Left ventricle myocardium inferior (tissue), 1 donor: ENCODE measurements at regions of chr7 and their contacts with region 1.

Region 1: DNA sequence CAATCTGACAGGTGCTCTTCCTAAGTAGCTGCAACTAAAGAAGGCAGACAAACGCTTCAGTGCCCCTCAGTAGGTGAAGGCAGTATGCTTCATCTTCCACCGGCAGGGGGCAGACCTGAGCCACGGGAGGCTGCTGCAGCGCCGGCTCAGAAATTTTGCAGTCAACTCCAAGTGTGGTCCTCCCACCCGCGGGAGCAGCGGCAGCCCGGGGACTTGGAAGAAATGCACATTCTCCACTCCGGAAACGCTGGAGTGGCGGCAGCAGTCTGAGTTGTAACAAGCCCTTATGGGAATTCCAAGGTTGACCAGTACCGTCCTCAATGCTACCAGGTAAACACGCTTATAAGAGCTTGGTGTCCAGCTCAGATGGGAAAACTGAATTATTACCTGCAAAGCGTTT is 3.4 kb downstream of the IGFBP3 start:
- DNase-seq: peak; percentile 82
- H3K4me3 ChIP-seq: peak overlapping the region; percentile 75
- H3K27ac ChIP-seq: no peak overlapping the region
- H3K4me1 ChIP-seq: peaks cover 51% of the 10 kb centered on the region
- H3K27me3 ChIP-seq: peaks cover 10% of the 10 kb centered on the region
- CTCF ChIP-seq: peak; percentile 99

Region 2: GRCh38 chr7:45494885-45495284 is 422.8 kb before region 1 on chr7:
- intact Hi-C with region 1: no loop called
- DNase-seq: no peak
- H3K4me3 ChIP-seq: no peak overlapping the region
- H3K27ac ChIP-seq: no peak overlapping the region
- H3K4me1 ChIP-seq: no peaks in the 10 kb centered on the region
- H3K27me3 ChIP-seq: peaks cover 37% of the 10 kb centered on the region
- CTCF ChIP-seq: no peak

Region 3: DNA sequence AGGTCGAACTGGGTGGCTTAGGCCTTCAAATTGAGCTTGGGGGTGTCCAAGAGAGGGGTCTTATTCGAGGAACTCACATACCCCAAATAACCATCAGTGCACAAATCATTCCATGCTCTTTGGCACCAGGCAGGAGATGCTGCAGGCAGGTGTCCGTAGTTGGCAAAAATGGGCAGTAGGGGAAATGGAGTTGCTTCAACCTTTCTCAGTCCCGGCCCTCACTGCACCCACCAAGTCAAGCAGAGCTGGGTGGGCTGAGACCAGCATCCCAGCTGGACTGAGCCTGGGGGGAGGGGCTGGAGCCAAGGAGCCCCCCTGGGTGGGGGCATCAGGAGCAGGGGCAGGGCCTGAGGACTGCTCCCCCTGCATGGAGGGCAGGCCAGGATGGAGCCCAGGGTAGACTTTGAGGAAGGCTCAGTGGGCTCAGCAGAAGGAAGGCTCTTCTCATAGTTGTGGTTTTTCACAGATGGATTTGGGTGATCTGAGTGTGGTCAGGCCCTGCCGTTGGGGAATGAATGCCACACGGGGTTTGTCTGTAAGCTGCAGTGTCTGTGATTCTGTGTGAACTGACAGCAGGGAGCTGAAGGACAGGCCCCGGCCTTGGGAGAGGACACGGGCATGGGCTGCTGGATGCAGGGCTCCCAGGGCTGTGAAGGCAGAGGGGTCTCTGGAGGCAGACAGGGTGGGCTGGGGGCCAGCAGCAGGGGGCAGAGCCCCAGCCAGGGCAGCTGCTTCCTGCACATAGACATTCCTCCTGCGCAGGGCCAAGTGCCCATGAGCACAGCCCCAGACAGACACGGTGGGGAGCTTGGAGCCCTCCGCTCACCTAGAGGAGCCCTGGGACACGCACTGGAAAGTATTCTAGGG is 199.0 kb before region 1 on chr7:
- intact Hi-C with region 1: no loop called
- DNase-seq: no peak
- H3K4me3 ChIP-seq: no peak overlapping the region
- H3K27ac ChIP-seq: no peak overlapping the region
- H3K4me1 ChIP-seq: peaks cover 14% of the 10 kb centered on the region
- H3K27me3 ChIP-seq: no peaks in the 10 kb centered on the region
- CTCF ChIP-seq: no peak

Region 4: DNA sequence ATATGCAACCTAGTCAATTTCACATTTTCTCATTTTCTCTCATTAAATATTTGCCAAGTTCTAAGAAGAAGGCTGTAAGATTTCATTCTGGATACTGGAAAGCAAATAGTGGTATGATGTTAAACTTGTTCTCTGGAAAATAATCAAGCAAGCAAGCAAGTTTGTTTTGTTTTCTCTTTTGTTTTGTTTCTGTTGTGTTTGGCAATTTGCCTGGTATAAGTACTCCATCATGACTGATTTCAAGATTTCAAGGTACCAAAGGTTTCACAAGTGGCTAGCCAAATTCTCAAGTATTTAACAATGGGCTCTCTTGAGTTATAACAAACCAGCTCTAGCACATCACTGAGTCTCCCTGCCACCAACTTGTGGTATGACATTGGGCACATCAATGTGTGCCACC is 155.0 kb after region 1 on chr7:
- intact Hi-C with region 1: no loop called
- DNase-seq: no peak
- H3K4me3 ChIP-seq: no peak overlapping the region
- H3K27ac ChIP-seq: no peak overlapping the region
- H3K4me1 ChIP-seq: no peaks in the 10 kb centered on the region
- H3K27me3 ChIP-seq: no peaks in the 10 kb centered on the region
- CTCF ChIP-seq: no peak

Region 5: GRCh38 chr7:46229409-46229808 is 311.8 kb after region 1 on chr7:
- intact Hi-C with region 1: no loop called
- DNase-seq: no peak
- H3K4me3 ChIP-seq: no peak overlapping the region
- H3K27ac ChIP-seq: no peak overlapping the region
- H3K4me1 ChIP-seq: no peaks in the 10 kb centered on the region
- H3K27me3 ChIP-seq: no peaks in the 10 kb centered on the region
- CTCF ChIP-seq: no peak

Region 6: GRCh38 chr7:47179812-47180515 is 1262.3 kb after region 1 on chr7:
- intact Hi-C with region 1: loop called (anchors 5 kb)
- DNase-seq: peak; percentile 38
- H3K4me3 ChIP-seq: no peak overlapping the region
- H3K27ac ChIP-seq: no peak overlapping the region
- H3K4me1 ChIP-seq: peaks cover 49% of the 10 kb centered on the region
- H3K27me3 ChIP-seq: no peaks in the 10 kb centered on the region
- CTCF ChIP-seq: peak; percentile 87

Region 7: DNA sequence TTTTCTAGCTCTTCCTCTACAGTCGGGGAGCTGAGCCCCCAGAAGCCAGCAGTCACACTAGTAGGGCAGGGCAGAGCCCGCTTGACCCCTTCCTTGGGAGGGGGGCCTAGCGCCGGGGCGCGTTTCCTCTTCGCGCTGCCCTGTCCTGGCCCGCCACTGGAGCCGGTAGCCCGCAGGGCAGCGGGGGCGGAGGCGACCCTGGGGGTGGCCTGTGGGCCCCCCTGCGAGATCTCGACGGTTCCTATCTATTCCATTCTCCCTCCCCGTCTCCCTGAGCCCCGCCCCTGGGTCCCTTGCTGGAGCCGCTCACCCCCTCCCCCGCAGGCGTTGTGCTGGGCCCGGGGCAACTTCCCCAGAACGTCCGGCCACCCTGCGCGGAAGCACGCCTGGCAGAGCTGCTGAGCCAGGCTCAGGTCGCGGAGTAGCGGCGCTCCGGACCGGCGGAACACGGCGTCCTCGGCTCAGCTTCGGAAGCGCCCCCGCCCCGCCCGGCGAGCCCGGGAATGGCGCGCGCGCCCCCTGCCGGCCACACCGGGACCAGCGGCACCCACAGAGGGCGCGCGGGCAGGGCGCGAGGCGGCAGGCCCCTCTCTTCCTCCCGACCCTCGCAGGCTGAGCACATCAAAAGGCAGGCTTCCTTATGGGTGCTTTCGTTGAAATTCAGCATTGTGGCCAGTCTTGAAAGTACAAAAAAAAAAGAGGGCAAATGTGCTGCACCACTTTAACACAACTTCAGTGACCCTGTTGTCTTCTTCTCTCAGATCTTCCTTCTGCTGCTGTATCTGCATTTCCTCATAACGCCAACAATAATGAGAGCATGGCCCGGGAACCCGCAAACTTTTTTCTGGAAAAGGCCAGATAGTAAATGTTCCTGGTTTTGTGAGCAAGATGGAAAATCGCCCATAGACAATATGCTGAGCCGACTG is 1336.7 kb after region 1 on chr7:
- intact Hi-C with region 1: loop called (anchors 10 kb)
- DNase-seq: peak; percentile 88
- H3K4me3 ChIP-seq: peak overlapping the region; percentile 76
- H3K27ac ChIP-seq: peak overlapping the region; percentile 96
- H3K4me1 ChIP-seq: peaks cover 18% of the 10 kb centered on the region
- H3K27me3 ChIP-seq: no peaks in the 10 kb centered on the region
- CTCF ChIP-seq: peak; percentile 99